ENCODE measurements at regions of chr17 and their contacts with region 1.

Region 1: DNA sequence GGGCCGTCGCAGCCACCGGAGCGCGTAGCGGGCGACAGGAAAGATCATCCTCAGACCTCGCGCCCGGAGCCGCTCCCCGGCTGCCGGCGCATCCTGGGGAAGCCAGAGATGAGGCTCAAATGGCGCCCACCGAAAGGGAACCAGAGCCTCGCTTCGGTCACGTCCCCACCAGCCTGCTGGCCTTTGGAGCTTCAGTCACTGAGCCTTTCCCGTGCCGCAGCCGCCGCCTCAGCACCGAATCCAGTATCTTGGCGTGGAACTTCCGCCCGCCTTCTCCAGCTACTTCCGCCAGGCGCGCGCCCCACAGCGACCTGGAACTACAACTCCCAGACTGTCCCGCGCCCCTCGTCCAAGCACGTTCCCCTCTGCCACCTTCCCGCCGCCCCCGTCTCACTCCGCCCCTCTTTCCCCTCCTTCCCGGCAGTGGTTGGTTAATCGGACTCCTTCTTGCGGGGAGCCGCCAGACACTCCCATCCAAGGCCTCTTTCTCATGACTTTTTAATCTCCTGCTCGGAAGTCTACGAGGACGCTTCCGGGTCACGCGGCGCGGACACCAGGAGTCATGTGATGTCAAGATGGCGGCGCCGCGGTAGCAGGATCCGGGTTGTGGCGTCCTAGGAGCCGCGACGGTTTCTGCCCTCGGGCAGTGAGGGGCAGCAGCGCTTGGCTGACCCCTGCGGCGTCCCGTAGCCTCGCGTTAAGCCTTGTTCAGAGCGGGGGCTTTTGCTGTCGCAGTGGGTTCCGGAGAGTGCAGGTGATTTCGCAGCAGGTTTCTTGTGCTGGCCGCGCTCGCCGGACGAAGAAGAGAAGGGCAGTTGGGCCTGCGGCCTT is at the starts of genes SMCR8 and TOP3A:
- DNase-seq: peak; percentile 97 to 99
- ATAC-seq: peak; percentile 97 to 99 (median 98)
- H3K4me3 ChIP-seq: peak within 1 kb of the TSS; percentile 78 to 100 (median 90)
- H3K27ac ChIP-seq: peak within 1 kb of the TSS; percentile 62 to 95 (median 86)
- H3K4me1 ChIP-seq: peaks cover 33 to 77% (median 67%) of the 10 kb centered on the region in 9 donors
- H3K27me3 ChIP-seq: no peaks in the 10 kb centered on the region
- CTCF ChIP-seq: no peak
- total RNA-seq, gene SMCR8: 9.5 to 15.7 (median 12.0) TPM
- total RNA-seq, gene TOP3A: 8.2 to 15.6 (median 13.2) TPM

Region 2: DNA sequence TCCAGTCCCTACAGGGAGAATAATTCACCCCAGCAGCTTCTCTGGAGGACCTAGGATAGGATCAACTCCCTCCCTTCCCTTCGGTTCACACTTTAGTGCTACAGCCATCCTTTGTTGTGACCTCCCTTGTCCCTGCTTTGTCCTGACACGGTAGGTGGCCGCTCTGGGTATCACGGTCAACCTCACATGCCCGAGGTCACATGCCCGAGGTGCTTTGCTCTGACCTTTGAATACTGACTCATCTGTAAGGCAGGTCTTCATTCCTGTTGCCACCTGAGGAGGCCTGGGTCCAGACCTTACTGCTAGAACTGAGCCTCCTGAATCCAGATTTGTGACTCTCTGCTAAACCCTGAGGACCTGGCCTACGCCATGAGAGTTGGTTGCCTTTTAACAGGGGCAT is 111.6 kb before region 1 on chr17:
- intact Hi-C with region 1: loop called in 1 of 10 experiments (anchors 10 kb)
- DNase-seq: no peak
- ATAC-seq: peak in 1 of 8 donors; percentile 36
- H3K4me3 ChIP-seq: no peak overlapping the region
- H3K27ac ChIP-seq: no peak overlapping the region
- H3K4me1 ChIP-seq: peaks cover 10 to 79% (median 50%) of the 10 kb centered on the region in 9 donors
- H3K27me3 ChIP-seq: no peaks in the 10 kb centered on the region
- CTCF ChIP-seq: no peak

Region 3: GRCh38 chr17:18217412-18218015 is 97.4 kb before region 1 on chr17:
- intact Hi-C with region 1: loop called in 6 of 10 experiments (anchors 5 to 10 kb)
- DNase-seq: peak; percentile 73 to 79
- ATAC-seq: peak; percentile 75 to 89 (median 86)
- H3K4me3 ChIP-seq: no peak overlapping the region
- H3K27ac ChIP-seq: no peak overlapping the region
- H3K4me1 ChIP-seq: peaks cover 0 to 18% (median 5%) of the 10 kb centered on the region in 9 donors
- H3K27me3 ChIP-seq: no peaks in the 10 kb centered on the region
- CTCF ChIP-seq: peak; percentile 81 to 94 (median 91)

Region 4: DNA sequence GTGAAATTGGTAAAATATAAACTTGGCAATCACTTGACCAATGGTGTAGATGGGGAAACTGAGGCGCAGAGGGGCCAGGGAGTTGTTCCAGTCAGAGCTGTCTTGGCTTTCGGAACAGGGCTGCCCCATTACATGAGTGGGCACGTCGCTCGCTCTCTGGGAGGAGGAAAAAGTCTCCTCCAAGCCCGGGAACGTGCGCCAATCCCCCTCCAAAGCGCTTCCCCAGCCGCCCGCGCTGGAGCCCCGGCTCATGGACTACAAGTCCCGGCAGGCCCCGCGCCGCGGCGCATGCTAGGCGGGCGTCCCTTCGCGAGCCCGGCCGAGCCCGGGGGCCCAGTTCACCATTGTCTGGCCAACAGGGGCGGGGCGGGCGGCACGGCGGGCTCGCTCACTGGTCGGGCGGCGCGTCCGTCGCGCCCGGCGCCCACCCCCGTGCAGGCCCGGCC is 89.8 kb before region 1 on chr17:
- intact Hi-C with region 1: loop called in 3 of 10 experiments (anchors 5 to 10 kb)
- DNase-seq: peak; percentile 95 to 98
- ATAC-seq: peak; percentile 96 to 98 (median 98)
- H3K4me3 ChIP-seq: peak overlapping the region in 9 of 10 donors; percentile 18 to 78 (median 53)
- H3K27ac ChIP-seq: peak overlapping the region; percentile 11 to 78 (median 64)
- H3K4me1 ChIP-seq: peaks cover 11 to 29% (median 20%) of the 10 kb centered on the region in 9 donors
- H3K27me3 ChIP-seq: no peaks in the 10 kb centered on the region
- CTCF ChIP-seq: no peak

Region 5: DNA sequence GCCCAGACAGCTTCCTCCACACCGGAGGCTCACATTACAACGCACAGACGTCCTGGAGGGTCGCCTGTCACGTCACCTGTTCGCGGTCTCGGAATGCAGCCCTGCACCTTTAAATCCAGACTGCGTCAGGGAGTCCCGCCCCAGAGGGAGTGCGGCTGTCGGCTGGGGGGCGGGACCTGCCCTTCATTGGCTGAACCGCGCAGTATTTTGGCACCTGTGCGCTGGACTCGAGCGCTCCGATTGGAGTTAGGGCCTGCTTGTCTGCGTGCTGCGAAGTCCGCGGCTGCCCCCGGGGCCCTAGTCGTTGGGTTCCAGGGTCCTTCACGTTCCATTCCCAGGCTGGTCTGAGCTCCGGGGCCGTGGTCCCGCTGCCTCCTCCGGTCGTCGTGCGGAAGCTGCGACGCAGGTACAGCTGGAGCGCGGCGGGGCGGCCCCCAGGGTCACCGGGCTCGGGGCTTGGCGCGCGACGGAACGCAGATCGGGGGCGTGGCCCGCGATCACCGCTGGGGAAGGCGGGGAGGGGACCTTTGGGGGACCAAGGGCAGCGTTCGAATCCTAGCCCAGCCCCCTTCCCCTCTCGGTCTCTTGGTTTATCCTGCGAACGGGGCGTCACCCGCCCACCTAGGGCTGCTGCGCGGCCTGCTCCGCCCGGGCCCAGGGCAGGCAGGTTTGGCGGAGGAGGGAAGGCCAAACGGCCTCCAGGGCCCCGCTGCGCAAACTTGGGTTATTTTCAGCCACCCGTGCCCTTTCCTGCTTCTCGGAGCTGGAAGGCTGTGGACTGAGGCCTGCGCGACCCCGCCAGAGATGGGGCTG is 54.4 kb before region 1 on chr17 and contains the start of gene MIEF2:
- intact Hi-C with region 1: loop called in 2 of 10 experiments (anchors 5 kb)
- DNase-seq: peak; percentile 94 to 97
- ATAC-seq: peak; percentile 80 to 90 (median 88)
- H3K4me3 ChIP-seq: peak within 1 kb of the TSS; percentile 59 to 96 (median 86)
- H3K27ac ChIP-seq: peak within 1 kb of the TSS; percentile 90 to 99 (median 96)
- H3K4me1 ChIP-seq: peaks cover 21 to 65% (median 56%) of the 10 kb centered on the region in 9 donors
- H3K27me3 ChIP-seq: no peaks in the 10 kb centered on the region
- CTCF ChIP-seq: no peak
- total RNA-seq, gene MIEF2: 23.9 to 43.4 (median 33.5) TPM

Region 6: GRCh38 chr17:18280766-18281371 is 34.1 kb before region 1 on chr17:
- intact Hi-C with region 1: no loop called
- DNase-seq: no peak
- ATAC-seq: peak in 2 of 8 donors; percentile 20 to 31
- H3K4me3 ChIP-seq: no peak overlapping the region
- H3K27ac ChIP-seq: no peak overlapping the region
- H3K4me1 ChIP-seq: peaks cover 0 to 11% (median 0%) of the 10 kb centered on the region in 9 donors
- H3K27me3 ChIP-seq: no peaks in the 10 kb centered on the region
- CTCF ChIP-seq: no peak

Region 7: DNA sequence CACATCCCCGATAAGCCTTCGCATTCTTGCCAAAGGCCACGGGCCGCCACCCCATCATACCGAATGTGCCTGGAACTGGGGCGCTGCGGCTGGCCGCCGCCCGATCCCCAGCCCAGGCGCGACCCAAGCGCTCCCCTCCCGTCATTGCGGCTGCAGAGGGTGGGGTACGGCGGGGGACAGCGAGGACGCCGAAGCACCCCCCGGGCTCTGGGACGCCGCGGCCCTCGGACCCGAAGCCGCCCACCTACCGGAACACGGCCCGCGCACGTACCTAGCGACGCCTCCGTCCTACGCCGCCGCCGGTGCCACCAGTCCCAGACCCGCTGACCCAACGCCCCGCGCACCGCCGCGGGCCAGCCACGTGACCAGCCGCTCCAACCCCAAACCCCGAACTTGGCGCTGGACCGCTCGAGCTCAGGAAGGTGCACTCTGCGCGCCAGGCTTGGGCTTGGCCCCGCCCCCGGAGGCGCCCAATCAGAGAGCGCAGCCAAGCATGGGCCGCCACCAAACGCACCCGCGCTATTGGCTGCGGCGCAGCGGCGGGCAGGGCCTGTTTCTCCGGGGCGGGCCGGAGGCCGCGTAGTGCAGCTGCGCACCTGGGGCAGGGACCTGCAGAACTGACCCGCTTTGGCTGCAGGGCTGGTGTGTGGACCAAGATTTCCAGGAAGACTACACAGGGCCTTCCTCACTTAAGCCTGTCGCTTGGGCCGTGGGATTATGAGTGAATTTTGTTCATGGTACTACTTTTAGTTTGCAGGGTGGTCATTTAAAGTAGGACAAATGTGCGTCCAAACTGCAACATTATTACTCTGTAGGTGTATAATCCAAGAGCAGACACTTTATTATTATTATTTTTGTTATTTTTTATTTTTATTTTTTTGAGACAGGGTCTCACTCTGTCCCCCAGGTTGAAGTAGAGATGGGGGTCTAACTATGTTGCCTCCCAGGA is 48.4 kb after region 1 on chr17 and contains the start of gene SHMT1:
- intact Hi-C with region 1: loop called in 2 of 10 experiments (anchors 2 kb)
- DNase-seq: peak; percentile 90 to 94
- ATAC-seq: peak; percentile 99 to 100 (median 100)
- H3K4me3 ChIP-seq: peak within 1 kb of the TSS; percentile 60 to 98 (median 84)
- H3K27ac ChIP-seq: peak within 1 kb of the TSS in 9 of 10 donors; percentile 23 to 83 (median 74)
- H3K4me1 ChIP-seq: peaks cover 0 to 24% (median 13%) of the 10 kb centered on the region in 9 donors
- H3K27me3 ChIP-seq: no peaks in the 10 kb centered on the region
- CTCF ChIP-seq: no peak
- total RNA-seq, gene SHMT1: 2.7 to 11.6 (median 4.9) TPM

Region 8: DNA sequence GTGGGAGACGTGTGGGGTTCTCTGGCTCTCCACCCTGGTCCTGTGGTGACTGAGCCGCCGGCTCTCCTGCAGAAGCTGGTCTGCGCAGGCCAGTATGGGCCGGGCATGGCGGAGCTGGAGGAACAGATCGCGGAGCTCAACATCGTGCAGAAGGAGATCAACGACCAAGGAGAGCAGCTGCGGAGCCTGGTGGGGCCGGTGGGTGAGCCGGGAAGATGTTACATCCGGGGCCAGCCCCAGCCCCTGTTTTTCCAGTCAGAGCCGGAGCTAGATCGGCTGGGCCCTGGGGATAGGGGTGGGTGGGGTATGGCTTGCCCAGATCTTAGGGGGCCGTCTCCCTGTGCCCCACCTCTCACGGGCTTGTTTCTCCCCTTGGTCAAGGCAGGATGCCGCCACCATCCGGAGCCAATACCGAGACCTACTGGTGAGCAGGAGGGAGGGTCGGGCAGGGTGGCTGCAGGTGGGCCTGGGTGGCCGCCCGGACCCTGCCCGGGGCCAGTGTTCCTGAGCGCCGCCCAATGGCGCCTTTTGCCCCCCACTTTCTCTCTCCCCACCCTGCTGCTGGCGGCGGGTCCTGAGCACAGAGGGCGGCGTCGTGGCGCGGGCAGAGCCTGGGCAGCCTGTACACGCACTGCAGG is 67.6 kb after region 1 on chr17:
- intact Hi-C with region 1: loop called in 1 of 10 experiments (anchors 10 kb)
- DNase-seq: no peak
- ATAC-seq: no peak
- H3K4me3 ChIP-seq: no peak overlapping the region
- H3K27ac ChIP-seq: no peak overlapping the region
- H3K4me1 ChIP-seq: peaks cover 0 to 4% (median 0%) of the 10 kb centered on the region in 9 donors
- H3K27me3 ChIP-seq: peaks cover 0 to 48% (median 43%) of the 10 kb centered on the region in 7 donors
- CTCF ChIP-seq: no peak

Region 9: DNA sequence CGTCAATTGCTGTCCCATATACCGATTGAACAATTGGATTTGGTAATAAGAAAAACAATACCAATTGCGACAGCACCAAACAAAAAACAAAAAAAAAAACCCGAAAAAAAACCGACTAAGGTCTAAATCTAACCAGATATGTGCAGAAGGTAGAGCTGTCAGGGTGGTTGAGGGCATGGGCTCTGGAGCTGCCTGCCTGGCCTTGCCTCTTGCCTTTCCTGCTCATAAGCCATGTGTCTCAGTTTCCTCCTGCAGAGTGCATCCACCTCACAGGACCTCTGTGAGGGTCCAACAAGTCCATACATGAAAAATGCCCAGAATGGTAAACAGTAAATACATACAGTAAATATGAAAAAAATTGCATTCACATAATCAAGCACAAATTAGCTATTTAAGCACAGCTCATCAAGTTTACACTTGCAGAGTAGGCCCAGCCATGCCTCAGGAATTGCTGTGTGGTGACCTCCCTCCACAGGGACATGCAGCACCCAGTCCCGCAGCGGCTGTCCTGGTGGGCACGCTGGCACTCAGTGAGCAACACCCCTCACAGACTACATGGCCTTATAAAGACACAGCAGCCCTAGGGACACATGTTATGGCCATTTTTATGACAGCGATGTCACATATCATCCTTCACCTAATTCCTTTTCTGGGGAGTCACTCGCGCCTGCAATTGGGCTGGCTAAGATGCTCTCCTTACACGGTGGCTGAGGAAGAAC is 311.4 kb after region 1 on chr17:
- intact Hi-C with region 1: no loop called
- DNase-seq: no peak
- ATAC-seq: no peak
- H3K4me3 ChIP-seq: peak overlapping the region in 5 of 10 donors; percentile 17 to 57 (median 54)
- H3K27ac ChIP-seq: no peak overlapping the region
- H3K4me1 ChIP-seq: peaks cover 0 to 8% (median 0%) of the 10 kb centered on the region in 9 donors
- H3K27me3 ChIP-seq: peaks cover 0 to 12% (median 0%) of the 10 kb centered on the region in 7 donors
- CTCF ChIP-seq: no peak

Measured in heart right ventricle (tissue), 16 donors.